ENCODE measurements at regions of chr10 and their contacts with region 1.

Region 1: DNA sequence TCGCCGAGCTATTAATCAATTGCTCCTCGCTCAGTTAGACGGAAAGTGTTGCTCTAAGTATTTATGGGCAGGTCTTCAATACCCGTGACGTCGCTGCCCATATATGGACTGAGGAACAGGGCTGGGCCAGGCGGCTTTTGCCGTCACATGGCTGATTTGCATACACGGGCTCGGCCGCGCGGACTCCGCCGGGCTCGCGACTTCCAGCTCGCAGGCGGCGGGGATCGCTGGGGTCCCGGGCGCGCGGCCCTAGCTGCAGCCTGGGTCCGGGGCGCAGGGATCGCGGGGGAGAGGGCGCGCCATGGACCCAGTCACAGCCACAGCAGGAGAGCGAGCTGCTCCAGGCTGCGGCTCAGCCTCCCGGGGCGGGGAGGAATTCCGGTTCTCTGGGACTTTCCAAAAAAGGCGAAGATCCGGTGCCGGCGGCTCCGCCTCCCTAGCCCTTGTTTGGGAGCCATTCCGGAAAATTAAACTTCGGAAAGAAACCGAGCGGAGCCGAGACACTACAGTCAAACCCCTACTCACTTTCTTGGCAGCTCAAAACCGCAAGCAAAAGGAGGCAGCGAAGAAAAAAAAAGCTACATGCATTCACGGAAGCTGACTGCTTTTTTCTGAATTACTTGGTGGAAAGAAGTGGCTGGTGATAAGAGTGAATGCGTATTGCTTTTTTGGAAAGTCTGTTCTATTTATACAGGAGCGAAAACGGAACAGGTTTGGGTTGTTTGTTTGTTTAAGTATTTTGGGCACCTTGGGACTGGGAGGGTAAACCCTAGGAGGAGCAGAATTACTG is at the start of gene EGR2:
- DNase-seq: peak; percentile 92
- ATAC-seq: peak; percentile 78
- H3K4me3 ChIP-seq: peak within 1 kb of the TSS; percentile 72
- H3K27ac ChIP-seq: peak within 1 kb of the TSS; percentile 72
- H3K4me1 ChIP-seq: peaks cover 19% of the 10 kb centered on the region
- H3K27me3 ChIP-seq: peaks cover 1 to 8% of the 10 kb centered on the region in 2 experiments; a peak in 3 of 4 replicates
- CTCF ChIP-seq: no peak
- EP300 ChIP-seq: peak in 1 of 2 experiments; percentile 56; a peak in 3 of 4 replicates
- POLR2A ChIP-seq: peak; percentile 44
- RAD21 ChIP-seq: no peak
- polyA plus RNA-seq, gene EGR2: 8.3 to 14.0 TPM

Region 2: DNA sequence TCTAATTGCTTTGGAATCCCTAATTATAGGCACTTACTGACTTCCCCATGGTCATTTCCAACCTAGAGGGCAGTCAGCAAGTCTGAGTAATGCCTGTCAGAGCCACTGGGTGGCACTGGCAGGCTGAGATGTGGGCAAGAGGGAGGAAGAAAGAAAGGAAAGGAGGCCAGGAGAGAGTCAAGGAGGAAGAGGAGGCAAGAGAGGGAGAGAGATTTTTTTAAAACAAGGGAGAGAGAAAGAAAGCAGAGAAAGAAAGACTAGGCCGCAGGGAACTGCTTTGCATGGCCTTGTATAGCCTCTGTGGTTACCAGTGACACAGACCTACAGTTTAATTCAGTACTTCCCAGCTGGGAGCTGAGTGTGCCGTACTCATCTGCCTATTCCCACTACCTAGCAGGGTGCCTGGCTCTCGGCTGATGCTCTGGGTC is 222.4 kb before region 1 on chr10:
- CTCF ChIA-PET with region 1: interaction called, 29 read pairs
- POLR2A ChIA-PET with region 1: interaction called, 5 read pairs
- RAD21 ChIA-PET with region 1: interaction called, 55 read pairs
- SMC1A ChIA-PET with region 1: interaction called, 27 read pairs
- in situ Hi-C with region 1: no loop called
- intact Hi-C with region 1: loop called (anchors 1 kb)
- DNase-seq: peak; percentile 30
- ATAC-seq: peak; percentile 94
- H3K4me3 ChIP-seq: no peak overlapping the region
- H3K27ac ChIP-seq: no peak overlapping the region
- H3K4me1 ChIP-seq: peaks cover 7% of the 10 kb centered on the region
- H3K27me3 ChIP-seq: no peaks in the 10 kb centered on the region
- CTCF ChIP-seq: peak; percentile 90 to 97 (median 95)
- EP300 ChIP-seq: no peak
- POLR2A ChIP-seq: no peak
- RAD21 ChIP-seq: peak; percentile 100

Region 3: DNA sequence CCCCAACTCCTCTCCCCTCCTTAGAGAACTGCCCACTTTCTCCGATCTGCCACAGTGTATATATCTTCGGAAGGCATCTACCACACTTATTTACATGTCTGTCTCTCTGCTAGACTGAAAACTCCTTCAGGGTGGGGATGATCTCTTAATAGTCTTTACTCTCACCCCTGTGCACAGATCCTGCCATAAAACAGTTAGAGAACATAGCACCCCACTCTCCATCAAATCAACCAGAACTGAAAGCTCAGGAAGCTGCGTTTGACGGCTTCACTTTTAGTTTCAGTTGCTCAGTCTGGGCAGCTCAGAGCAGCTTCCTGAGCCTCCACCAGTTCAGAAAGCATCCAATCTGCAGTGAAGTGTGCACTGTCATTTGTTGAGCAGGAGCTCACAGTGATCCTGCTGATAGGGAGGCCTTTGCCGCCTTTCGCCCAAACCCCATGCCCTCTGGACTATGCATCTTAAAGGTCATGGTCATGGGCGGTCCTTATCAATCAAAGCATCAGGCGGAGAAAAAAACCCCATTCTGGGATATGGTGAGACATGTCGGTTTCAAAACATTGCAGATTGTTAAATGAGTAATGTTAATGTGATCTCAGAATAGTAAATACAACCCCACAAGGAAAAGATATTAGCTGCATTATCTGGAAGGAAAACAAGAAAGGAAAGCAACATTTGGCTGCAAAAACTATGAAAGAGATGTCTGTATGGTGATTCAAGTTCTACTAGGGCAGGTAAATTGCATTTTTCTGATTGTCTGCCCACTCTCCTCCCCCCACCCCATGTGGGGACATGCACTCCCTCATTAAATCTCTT is 179.1 kb before region 1 on chr10:
- CTCF ChIA-PET with region 1: interaction called, 10 read pairs
- POLR2A ChIA-PET with region 1: interaction called, 7 read pairs
- RAD21 ChIA-PET with region 1: interaction called, 64 read pairs
- SMC1A ChIA-PET with region 1: interaction called, 82 read pairs
- in situ Hi-C with region 1: no loop called
- intact Hi-C with region 1: loop called (anchors 1 kb)
- DNase-seq: peak; percentile 81
- ATAC-seq: peak; percentile 79
- H3K4me3 ChIP-seq: peak overlapping the region; percentile 12
- H3K27ac ChIP-seq: peak overlapping the region; percentile 95
- H3K4me1 ChIP-seq: peaks cover 85% of the 10 kb centered on the region
- H3K27me3 ChIP-seq: no peaks in the 10 kb centered on the region
- CTCF ChIP-seq: no peak
- EP300 ChIP-seq: peak; percentile 23 to 60; a peak in 3 of 4 replicates
- POLR2A ChIP-seq: peak; percentile 61
- RAD21 ChIP-seq: no peak

Region 4: GRCh38 chr10:62732841-62733653 is 83.5 kb before region 1 on chr10:
- CTCF ChIA-PET with region 1: interaction called, 20 read pairs
- POLR2A ChIA-PET with region 1: interaction called, 14 read pairs
- RAD21 ChIA-PET with region 1: interaction called, 141 read pairs
- SMC1A ChIA-PET with region 1: interaction called, 82 read pairs
- in situ Hi-C with region 1: no loop called
- intact Hi-C with region 1: loop called (anchors 1 kb)
- DNase-seq: peak; percentile 94
- ATAC-seq: peak; percentile 83
- H3K4me3 ChIP-seq: peak overlapping the region; percentile 41; the same call in 1 of the 2 replicates
- H3K27ac ChIP-seq: peak overlapping the region; percentile 93
- H3K4me1 ChIP-seq: peaks cover 50% of the 10 kb centered on the region
- H3K27me3 ChIP-seq: no peaks in the 10 kb centered on the region
- CTCF ChIP-seq: no peak
- EP300 ChIP-seq: peak; percentile 83 to 87; a peak in 3 of 4 replicates
- POLR2A ChIP-seq: no peak; the same call in 1 of the 2 replicates
- RAD21 ChIP-seq: peak; percentile 38; the same call in 1 of the 2 replicates

Region 5: DNA sequence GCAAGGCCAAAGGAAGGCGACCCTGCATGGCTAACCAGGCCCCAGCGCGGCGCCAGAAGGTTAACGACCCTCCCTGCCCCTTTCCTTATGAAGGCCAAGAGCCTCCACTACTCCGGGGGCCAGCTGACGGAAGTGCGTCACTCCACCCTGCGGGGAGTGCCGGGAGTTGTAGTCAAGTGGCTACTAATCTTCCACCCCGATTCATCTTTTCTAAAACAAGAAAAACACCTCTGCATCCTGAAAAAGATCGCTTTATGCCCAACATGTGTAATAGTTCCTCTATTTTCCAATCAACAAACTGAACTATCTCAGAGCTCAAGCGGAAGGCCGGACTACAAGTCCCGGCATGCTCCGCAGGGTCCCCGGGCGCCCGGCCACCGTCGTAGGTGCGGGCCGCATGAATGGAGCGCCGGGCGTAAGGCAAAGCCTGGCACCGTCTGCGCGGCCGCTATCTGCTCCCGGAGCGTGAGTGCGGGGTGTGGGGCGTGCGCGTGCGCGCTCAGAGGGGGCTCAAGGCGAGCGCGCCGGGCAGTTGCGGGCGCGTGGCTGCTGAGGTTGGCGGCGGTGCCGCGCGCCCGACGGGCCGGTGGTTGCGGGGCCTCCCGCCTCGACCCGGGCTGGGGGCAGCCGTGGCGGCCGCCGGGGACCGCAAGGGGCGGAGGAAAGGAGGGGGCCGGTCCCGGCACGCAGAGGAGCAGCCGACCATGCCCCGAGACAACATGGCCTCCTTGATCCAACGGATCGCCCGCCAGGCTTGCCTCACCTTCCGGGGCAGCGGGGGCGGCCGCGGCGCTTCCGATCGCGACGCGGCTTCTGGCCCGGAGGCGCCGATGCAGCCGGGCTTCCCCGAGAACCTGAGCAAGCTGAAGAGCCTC is 11.9 kb before region 1 on chr10 and contains the start of gene ADO:
- CTCF ChIA-PET with region 1: interaction called, 7 read pairs
- POLR2A ChIA-PET with region 1: interaction called, 46 read pairs
- RAD21 ChIA-PET with region 1: interaction called, 75 read pairs
- SMC1A ChIA-PET with region 1: interaction called, 43 read pairs
- in situ Hi-C with region 1: no loop called
- intact Hi-C with region 1: no loop called
- DNase-seq: peak; percentile 59
- ATAC-seq: peak; percentile 83
- H3K4me3 ChIP-seq: peak within 1 kb of the TSS; percentile 88
- H3K27ac ChIP-seq: peak within 1 kb of the TSS; percentile 98
- H3K4me1 ChIP-seq: peaks cover 4% of the 10 kb centered on the region; the same call in 1 of the 2 replicates
- H3K27me3 ChIP-seq: no peaks in the 10 kb centered on the region
- CTCF ChIP-seq: no peak
- EP300 ChIP-seq: peak in 1 of 2 experiments; percentile 26; a peak in 1 of 4 replicates
- POLR2A ChIP-seq: peak; percentile 89
- RAD21 ChIP-seq: 0 out of 2 replicates have a peak, but pooled peaks have one; percentile 6
- polyA plus RNA-seq, gene ADO: 4.3 to 8.5 TPM

Region 6: DNA sequence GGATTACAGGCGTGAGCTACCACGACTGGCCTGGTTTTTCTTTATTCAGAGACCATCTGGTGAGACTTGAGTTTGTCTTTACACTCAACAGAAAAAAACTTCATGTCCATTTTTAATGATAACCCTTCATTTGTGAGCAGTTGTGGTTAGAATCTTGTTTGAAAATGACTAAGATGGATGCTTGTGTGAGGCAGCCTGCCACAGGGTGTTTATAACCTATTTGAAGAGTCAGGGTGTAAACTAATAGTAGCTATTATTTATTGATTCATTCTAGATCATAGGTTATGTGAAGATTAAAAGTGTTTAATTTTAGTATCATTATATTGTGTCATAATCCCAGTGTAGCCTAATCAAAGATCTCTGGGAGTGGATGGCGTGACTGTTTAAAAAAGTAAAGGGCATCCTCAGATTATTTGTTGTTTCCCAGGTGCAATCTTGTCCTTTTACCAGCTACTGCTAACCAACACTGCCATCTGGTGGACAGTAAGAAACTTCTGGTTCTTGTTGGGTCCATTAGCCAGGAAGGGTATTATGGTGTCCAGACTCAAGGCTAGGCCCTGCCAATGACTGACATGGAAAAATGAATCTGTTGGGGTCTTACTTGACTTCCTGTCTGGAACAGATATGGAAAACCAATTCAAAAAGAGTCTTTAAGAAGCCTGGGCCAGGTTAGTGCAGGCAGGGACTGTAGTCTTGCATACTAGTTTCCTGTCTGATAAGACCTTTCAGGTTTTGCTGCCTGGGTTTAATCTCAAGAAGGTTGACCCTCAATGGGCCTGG is 341.5 kb after region 1 on chr10:
- CTCF ChIA-PET with region 1: interaction called, 24 read pairs
- POLR2A ChIA-PET with region 1: no interaction called
- RAD21 ChIA-PET with region 1: interaction called, 8 read pairs
- SMC1A ChIA-PET with region 1: interaction called, 11 read pairs
- in situ Hi-C with region 1: no loop called
- intact Hi-C with region 1: loop called (anchors 5 kb)
- DNase-seq: peak; percentile 49
- ATAC-seq: peak; percentile 89
- H3K4me3 ChIP-seq: no peak overlapping the region
- H3K27ac ChIP-seq: 0 out of 2 replicates have a peak overlapping the region, but pooled peaks have one; percentile 31
- H3K4me1 ChIP-seq: peaks cover 3% of the 10 kb centered on the region; the same call in 1 of the 2 replicates
- H3K27me3 ChIP-seq: no peaks in the 10 kb centered on the region
- CTCF ChIP-seq: peak; percentile 70 to 86 (median 74); a peak in 5 of 6 replicates
- EP300 ChIP-seq: no peak
- POLR2A ChIP-seq: no peak
- RAD21 ChIP-seq: peak; percentile 97

Measured in GM12878 (cell line).